ENCODE measurements at regions of chr5 and their contacts with region 1.

Region 1: DNA sequence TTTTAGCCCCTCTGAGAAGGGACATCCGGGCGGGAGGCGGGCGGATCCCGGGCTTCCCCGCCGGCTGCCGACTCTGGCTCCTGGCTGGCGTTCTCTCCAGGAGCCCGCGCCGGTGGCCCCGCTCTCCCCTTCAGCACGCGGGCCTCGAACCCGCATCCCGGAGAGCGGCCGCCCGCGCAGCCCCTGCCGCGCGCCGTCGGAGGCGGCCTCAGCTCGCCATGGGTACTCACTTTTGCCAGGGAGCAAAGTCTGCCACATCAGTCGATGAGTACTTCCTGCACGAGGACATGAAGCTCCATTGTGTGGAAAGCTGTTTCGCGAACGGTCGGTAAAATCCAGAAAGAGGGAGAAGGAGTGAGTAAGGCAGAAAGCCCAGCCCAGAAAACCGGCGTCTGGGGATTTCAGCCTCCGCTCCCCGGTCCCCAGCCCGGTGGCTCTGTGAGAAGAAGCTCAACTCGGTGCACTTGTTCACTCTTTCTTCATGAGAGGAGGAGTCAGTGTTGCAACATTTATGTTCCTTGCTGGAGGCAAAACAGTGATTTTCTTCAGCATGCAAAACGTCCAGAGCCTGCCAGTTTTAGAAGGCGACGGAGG is at the start of gene PRLR:
- ATAC-seq: peak; percentile 58 to 87 (median 73)
- H3K4me3 ChIP-seq: peak within 1 kb of the TSS; percentile 30 to 36 (median 32)
- H3K27ac ChIP-seq: no peak within 1 kb of the TSS
- H3K4me1 ChIP-seq: no peaks in the 10 kb centered on the region
- total RNA-seq, gene PRLR: 0.22 to 6.6 (median 1.2) TPM

Region 2: GRCh38 chr5:35598707-35599370 is 368.7 kb after region 1 on chr5:
- in situ Hi-C with region 1: loop called in 1 of 9 experiments (anchors 25 kb)
- ATAC-seq: peak in 1 of 8 experiments; percentile 88
- H3K4me3 ChIP-seq: no peak overlapping the region
- H3K27ac ChIP-seq: no peak overlapping the region
- H3K4me1 ChIP-seq: no peaks in the 10 kb centered on the region